Adrenal gland (tissue), 19 donors: ENCODE measurements at regions of chr2 and their contacts with region 1.

Region 1: DNA sequence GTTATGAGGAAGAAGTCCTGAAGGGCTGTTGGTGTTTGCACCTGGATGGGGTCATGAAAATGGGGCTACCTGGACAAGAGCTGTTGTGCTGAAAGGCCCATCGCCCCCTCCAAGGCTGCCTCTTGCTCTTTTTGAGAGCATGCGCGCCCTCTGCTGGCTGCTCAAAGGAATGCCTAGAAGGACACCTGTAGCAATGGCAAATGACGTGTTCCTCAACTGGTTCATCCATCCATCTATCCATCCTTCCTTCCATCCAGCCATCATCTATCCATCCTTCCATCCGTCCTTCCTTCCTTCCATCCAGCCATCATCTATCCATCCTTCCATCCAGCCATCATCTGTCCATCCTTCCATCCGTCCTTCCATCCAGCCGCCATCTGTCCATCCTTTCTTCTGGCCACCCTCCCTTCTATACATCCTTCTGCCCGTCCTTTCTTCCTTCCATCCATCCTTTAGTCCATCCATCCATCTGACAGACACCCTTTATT is 17.2 kb upstream of the RPL31 start:
- DNase-seq: peak; percentile 71 to 92 (median 80)
- H3K4me3 ChIP-seq: no peak overlapping the region
- H3K27ac ChIP-seq: peak overlapping the region in 1 of 5 donors; percentile 24
- H3K4me1 ChIP-seq: peaks cover 0 to 8% of the 10 kb centered on the region in 2 donors
- H3K27me3 ChIP-seq: no peaks in the 10 kb centered on the region
- CTCF ChIP-seq: peak; percentile 82 to 96 (median 92)
- POLR2A ChIP-seq: no peak

Region 2: GRCh38 chr2:100610381-100610831 is 374.5 kb before region 1 on chr2:
- intact Hi-C with region 1: loop called (anchors 2 to 5 kb)
- DNase-seq: peak; percentile 49 to 86 (median 69)
- H3K4me3 ChIP-seq: no peak overlapping the region
- H3K27ac ChIP-seq: no peak overlapping the region
- H3K4me1 ChIP-seq: no peaks in the 10 kb centered on the region
- H3K27me3 ChIP-seq: no peaks in the 10 kb centered on the region
- CTCF ChIP-seq: peak in 5 of 6 experiments; percentile 23 to 64 (median 54)
- POLR2A ChIP-seq: no peak

Region 3: GRCh38 chr2:100730346-100730745 is 254.6 kb before region 1 on chr2:
- intact Hi-C with region 1: loop called (anchors 2 kb)
- DNase-seq: peak; percentile 68 to 84 (median 75)
- H3K4me3 ChIP-seq: no peak overlapping the region
- H3K27ac ChIP-seq: no peak overlapping the region
- H3K4me1 ChIP-seq: peaks cover 6 to 14% of the 10 kb centered on the region in 2 donors
- H3K27me3 ChIP-seq: no peaks in the 10 kb centered on the region
- CTCF ChIP-seq: peak; percentile 30 to 76 (median 76)
- POLR2A ChIP-seq: no peak

Region 4: GRCh38 chr2:100818606-100819369 is 166.1 kb before region 1 on chr2:
- intact Hi-C with region 1: loop called in 1 of 2 experiments (anchors 5 kb)
- DNase-seq: peak; percentile 79 to 90 (median 87)
- H3K4me3 ChIP-seq: peak overlapping the region in 2 of 4 donors; percentile 59 to 89
- H3K27ac ChIP-seq: peak overlapping the region in 4 of 5 donors; percentile 74 to 91 (median 88)
- H3K4me1 ChIP-seq: peaks cover 6 to 33% of the 10 kb centered on the region in 2 donors
- H3K27me3 ChIP-seq: no peaks in the 10 kb centered on the region
- CTCF ChIP-seq: peak in 4 of 6 experiments; percentile 7 to 43 (median 13)
- POLR2A ChIP-seq: peak in 1 of 2 donors; percentile 48